Heart right ventricle (tissue), 16 donors: ENCODE measurements at regions of chr1 and their contacts with region 1.

Region 1: DNA sequence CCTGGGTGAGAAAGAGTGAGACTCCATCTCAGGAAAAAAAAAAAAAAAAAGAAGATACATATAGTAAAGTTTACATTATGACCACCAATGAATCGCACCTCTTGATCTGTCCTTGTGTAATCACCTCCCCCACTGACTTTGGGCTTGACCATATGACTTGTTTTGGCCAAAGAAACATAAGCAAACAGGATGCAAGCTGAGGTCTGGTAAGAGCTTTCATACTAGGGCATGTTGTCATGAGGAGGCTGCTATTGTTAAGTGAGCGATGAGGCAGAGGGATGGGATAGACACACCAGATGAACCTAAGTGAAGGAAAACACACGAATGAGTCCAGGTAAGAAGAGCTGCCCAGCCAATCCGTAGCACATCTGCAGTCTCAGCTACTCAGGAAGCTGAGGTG is 10.7 kb downstream of the ENAH start:
- DNase-seq: no peak
- ATAC-seq: no peak
- H3K4me3 ChIP-seq: no peak overlapping the region
- H3K27ac ChIP-seq: no peak overlapping the region
- H3K4me1 ChIP-seq: peaks cover 0 to 28% (median 8%) of the 10 kb centered on the region in 9 donors
- H3K27me3 ChIP-seq: no peaks in the 10 kb centered on the region
- CTCF ChIP-seq: no peak

Region 2: DNA sequence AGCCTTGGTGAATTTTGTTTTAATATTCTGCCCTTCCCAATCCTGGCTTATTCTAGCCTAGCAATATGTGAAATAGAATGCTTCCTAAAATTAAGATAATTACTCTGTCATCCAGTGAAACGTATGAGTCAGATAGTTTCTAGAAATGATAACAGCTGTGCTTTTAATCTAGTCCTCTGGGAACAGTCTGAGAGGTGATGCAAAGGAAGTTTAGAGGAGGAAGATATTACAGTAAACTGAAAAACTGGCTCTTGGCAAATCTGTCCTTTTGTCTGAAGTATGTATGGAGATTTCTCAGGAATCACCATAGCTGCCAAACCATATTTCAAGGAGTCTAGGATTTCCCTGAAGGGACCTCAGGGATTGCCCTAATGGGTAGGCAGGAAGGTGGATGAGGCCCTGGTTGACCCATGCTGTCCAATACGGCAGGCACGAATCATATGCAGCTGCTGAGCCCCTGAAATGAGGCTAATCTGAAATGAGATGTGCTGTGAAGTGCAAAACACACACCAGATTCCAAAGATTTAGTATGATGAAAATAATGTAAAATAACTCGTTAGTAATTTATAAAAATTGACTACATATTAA is 143.5 kb before region 1 on chr1:
- intact Hi-C with region 1: loop called in 1 of 10 experiments (anchors 10 kb)
- DNase-seq: no peak
- ATAC-seq: no peak
- H3K4me3 ChIP-seq: no peak overlapping the region
- H3K27ac ChIP-seq: peak overlapping the region in 1 of 10 donors; percentile 29
- H3K4me1 ChIP-seq: peaks cover 0 to 6% (median 0%) of the 10 kb centered on the region in 9 donors
- H3K27me3 ChIP-seq: no peaks in the 10 kb centered on the region
- CTCF ChIP-seq: no peak

Region 3: DNA sequence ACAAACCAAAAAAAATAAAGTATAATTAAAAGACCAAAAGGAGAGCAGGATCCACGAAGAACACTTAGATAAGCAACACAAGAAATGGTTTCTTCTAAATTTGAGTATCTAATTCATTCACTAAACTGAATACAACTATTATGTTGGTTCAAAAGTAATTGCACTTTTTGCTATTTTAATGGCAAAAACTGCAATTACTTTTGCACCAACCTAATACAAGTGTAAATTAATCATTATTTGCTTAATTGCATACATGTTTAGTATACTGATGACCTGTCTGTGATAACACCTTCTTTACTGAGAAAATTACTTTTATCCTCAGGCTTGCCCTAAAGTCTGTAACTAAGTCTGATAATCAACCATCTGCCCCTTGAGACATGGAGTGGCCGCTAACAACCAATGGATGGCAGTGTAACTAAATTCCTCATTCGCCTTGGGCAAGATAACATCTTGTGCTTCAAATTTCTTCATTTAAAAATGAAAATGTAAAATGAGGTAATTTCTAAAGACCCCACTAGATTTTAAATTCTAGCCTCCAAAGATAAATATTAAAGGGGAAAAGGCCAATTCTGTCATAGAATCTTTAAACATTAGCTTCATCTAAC is 74.5 kb before region 1 on chr1:
- intact Hi-C with region 1: loop called in 1 of 10 experiments (anchors 10 kb)
- DNase-seq: no peak
- ATAC-seq: no peak
- H3K4me3 ChIP-seq: no peak overlapping the region
- H3K27ac ChIP-seq: no peak overlapping the region
- H3K4me1 ChIP-seq: peaks cover 0 to 46% (median 23%) of the 10 kb centered on the region in 9 donors
- H3K27me3 ChIP-seq: no peaks in the 10 kb centered on the region
- CTCF ChIP-seq: peak in 5 of 9 donors; percentile 11 to 37 (median 25)

Region 4: DNA sequence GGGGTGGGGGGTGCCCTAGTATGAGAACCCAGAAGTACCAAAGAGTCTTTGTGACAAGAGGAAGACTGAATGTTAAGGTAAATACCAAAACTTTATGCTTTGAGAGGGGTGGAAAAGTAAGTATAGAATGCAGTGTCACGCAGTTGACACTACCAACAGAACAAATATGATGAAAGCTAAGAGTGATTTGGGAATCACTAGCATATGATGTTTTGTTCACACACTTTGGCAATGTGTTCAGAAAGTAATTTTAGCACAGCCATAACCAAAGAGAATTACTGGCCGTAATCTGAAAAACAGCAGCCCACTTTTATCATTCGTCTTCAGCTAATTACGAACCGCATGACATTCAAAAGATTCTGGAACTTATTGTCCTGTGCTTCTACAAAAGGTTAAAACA is 48.8 kb before region 1 on chr1:
- intact Hi-C with region 1: loop called in 1 of 10 experiments (anchors 5 kb)
- DNase-seq: no peak
- ATAC-seq: peak in 4 of 8 donors; percentile 14 to 64 (median 52)
- H3K4me3 ChIP-seq: no peak overlapping the region
- H3K27ac ChIP-seq: peak overlapping the region in 8 of 10 donors; percentile 1 to 81 (median 50)
- H3K4me1 ChIP-seq: peaks cover 0 to 69% (median 39%) of the 10 kb centered on the region in 9 donors
- H3K27me3 ChIP-seq: no peaks in the 10 kb centered on the region
- CTCF ChIP-seq: no peak

Region 5: GRCh38 chr1:225825607-225826007 is 183.4 kb after region 1 on chr1:
- intact Hi-C with region 1: no loop called
- DNase-seq: no peak
- ATAC-seq: peak in 7 of 8 donors; percentile 31 to 57 (median 47)
- H3K4me3 ChIP-seq: peak overlapping the region in 1 of 10 donors; percentile 2
- H3K27ac ChIP-seq: peak overlapping the region in 4 of 10 donors; percentile 25 to 59 (median 40)
- H3K4me1 ChIP-seq: peaks cover 8 to 52% (median 46%) of the 10 kb centered on the region in 9 donors
- H3K27me3 ChIP-seq: no peaks in the 10 kb centered on the region
- CTCF ChIP-seq: no peak

Region 6: DNA sequence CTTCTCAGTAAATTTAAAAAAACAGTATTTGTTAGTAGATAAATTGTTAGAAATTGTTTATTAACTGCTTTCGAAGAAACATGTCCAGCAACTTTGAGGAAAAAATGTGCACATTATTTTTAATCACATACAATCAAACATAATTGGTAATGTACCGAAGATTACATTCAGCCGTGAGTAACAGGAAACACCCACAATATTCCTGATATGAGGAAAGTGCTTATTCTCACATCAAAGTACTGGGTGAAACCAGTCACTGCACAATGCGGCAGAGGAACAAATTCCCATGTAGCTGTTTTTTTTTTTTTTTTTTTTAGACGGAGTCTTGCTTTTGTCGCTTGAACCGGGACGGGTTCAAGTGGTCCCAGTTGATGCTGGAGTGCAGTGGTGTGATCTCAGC is 534.7 kb after region 1 on chr1:
- intact Hi-C with region 1: no loop called
- DNase-seq: no peak
- ATAC-seq: no peak
- H3K4me3 ChIP-seq: no peak overlapping the region
- H3K27ac ChIP-seq: no peak overlapping the region
- H3K4me1 ChIP-seq: peaks cover 3 to 48% (median 26%) of the 10 kb centered on the region in 9 donors
- H3K27me3 ChIP-seq: no peaks in the 10 kb centered on the region
- CTCF ChIP-seq: no peak